ENCODE measurements at regions of chr10 and their contacts with region 1.

Region 1: DNA sequence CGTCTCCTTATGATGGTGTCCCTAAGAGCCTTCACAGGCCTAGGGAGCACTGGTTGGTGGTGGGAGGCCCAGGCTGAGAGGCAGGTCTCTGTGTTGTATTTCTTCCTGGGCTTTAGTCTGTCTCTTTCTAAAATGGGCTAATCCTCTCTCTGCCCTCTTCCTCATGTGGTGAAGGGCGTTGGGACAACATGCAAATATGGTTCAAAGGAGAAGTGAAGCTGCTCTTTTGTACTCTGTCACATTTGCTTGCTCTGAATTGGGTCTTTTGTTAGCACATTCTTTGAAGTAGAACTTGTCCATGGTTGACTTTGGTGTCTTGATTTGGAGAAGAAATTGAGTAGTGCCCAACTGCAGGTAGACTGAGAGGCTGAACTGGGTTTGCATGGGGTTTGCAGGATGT is 814 bp downstream of the HK1 start:
- DNase-seq: no peak
- H3K4me3 ChIP-seq: no peak overlapping the region
- H3K27ac ChIP-seq: no peak overlapping the region
- H3K4me1 ChIP-seq: no peaks in the 10 kb centered on the region
- H3K27me3 ChIP-seq: no peaks in the 10 kb centered on the region
- CTCF ChIP-seq: no peak

Region 2: DNA sequence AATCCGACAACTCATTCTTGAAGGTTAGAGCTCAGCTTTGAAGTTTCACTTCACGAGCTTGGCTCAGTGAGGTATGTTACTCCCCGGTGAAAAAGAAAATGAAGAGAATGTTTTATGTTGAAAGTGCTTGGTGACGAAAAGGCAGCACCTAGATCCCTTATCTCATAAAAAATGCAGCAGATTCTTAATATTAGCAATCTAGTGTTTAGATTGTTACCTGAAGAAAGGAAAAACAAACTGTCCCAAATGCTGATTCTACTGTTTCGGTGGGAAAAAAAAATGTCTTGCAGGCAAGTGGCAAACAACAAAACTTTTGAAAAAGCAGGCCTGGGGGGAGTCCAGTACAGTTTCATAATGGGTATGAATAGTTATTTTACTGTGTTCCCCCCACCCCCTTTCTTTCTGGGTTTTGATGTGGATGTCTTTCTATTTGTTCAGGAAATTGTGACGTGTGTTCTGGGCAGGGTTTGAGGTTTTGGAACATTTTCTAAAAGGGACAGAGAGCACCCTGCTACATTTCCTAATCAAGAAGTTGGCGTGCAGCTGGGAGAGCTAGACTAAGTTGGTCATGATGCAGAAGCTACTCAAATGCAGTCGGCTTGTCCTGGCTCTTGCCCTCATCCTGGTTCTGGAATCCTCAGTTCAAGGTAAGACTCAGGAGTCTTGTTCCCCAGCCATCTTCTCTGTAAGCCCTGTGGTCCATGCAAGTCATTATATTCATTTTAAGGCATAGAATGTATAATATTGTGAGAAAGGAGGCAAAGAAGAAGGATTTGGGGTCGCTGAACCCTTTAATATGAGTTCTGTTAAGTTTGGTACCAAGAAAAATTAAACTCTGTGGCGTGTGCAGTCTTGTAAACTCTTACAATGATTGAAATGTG is 191.3 kb before region 1 on chr10 and contains the start of gene SRGN:
- CTCF ChIA-PET with region 1: no interaction called
- POLR2A ChIA-PET with region 1: no interaction called
- intact Hi-C with region 1: no loop called
- DNase-seq: no peak
- H3K4me3 ChIP-seq: no peak within 1 kb of the TSS
- H3K27ac ChIP-seq: no peak within 1 kb of the TSS
- H3K4me1 ChIP-seq: no peaks in the 10 kb centered on the region
- H3K27me3 ChIP-seq: no peaks in the 10 kb centered on the region
- CTCF ChIP-seq: no peak
- total RNA-seq, gene SRGN: 0.32 TPM in 1 of 2 replicates, not detected in the other

Region 3: DNA sequence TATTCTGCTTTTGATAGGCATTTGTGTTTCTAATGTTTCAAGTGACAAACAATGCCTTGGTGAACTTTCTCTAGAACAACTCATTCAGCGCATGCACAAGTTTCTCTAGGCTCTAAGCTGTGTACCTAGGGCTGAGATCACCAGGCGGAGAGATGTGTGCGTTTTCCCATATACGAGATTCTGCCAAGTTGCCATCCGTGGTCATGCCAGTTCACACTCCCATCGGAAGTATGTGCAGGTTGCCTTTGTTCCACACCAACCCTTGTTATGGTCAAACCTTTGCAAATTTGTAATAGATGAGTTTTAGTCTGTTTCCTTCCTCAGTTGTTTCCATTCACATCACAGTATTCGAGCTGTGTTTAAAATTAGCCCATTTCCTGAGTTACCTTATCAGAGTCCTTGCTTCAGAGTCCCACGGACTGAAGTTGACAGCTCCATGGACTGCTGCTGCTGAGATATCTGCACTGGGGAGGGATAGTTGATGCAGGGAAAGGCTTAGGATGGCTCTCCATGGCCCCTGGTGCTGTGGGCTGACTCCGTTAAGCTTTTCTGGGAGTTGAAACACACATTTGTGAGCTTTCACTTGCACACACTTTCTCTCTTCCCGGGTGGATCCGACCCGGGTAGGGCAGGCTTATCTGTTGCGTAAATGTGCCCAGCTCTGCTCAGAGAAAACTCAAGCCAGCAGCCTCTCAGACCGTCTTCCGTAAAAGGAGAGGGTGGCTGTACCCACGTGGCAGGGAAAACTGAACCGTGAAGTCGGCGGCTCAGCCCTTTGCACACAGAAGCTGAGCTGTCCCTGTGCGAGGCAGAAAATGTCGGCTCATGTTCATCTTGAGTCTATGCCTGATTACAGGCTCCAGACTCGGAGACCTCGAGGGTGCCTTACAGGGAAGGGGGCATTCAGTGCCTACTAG is 48.6 kb after region 1 on chr10:
- CTCF ChIA-PET with region 1: no interaction called
- POLR2A ChIA-PET with region 1: interaction called, 12 read pairs
- intact Hi-C with region 1: no loop called
- DNase-seq: peak; percentile 76
- H3K4me3 ChIP-seq: peak overlapping the region; percentile 8
- H3K27ac ChIP-seq: peak overlapping the region; percentile 80
- H3K4me1 ChIP-seq: peaks cover 42% of the 10 kb centered on the region
- H3K27me3 ChIP-seq: no peaks in the 10 kb centered on the region
- CTCF ChIP-seq: no peak

Region 4: GRCh38 chr10:69668721-69669120 is 389.6 kb after region 1 on chr10:
- CTCF ChIA-PET with region 1: no interaction called
- POLR2A ChIA-PET with region 1: no interaction called
- intact Hi-C with region 1: no loop called
- DNase-seq: peak; percentile 17
- H3K4me3 ChIP-seq: no peak overlapping the region
- H3K27ac ChIP-seq: no peak overlapping the region
- H3K4me1 ChIP-seq: no peaks in the 10 kb centered on the region
- H3K27me3 ChIP-seq: peaks cover 24% of the 10 kb centered on the region
- CTCF ChIP-seq: no peak

Measured in A673 (cell line).